ENCODE measurements at regions of chr3 and their contacts with region 1.

Region 1: DNA sequence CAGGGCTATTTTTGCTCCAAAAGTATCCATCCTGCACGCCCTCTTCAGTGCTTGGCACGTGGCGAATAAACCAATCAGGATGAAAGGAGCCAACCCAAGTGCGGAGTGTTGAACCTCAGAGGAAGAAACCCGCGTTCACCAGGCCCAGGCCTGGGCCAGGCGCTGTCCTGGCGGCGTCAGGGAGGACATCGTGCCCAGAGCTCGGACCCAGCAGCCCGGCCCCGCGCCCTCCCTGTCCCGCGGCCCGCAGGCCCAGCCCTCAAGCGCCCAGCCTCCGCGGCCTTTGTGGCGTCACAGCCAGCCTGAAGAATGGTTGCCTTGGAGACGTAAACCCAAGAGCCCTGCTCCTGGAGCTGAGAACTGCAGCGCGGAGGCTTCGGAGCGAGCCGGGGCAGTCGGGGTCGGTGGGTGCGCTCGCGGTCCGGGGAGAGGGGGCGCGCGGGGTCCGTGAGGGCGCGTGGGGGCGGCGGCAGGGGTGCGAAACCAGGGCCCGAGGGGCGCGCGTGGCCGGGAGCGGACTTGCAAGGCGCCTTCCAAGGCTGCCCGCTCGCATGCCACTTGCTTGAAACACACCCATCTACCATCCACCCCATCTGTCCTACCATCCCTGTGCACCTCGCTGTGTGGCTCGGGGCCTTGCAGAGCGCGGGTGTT is at the start of gene CFAP100:
- ATAC-seq: peak; percentile 83 to 99 (median 97)
- H3K4me3 ChIP-seq: peak within 1 kb of the TSS in 4 of 5 donors; percentile 4 to 25 (median 16)
- H3K27ac ChIP-seq: no peak within 1 kb of the TSS
- H3K4me1 ChIP-seq: peaks cover 8 to 13% of the 10 kb centered on the region in 2 donors
- total RNA-seq, gene CFAP100: 0.22 to 5.8 (median 0.66) TPM in 4 of 8 experiments, not detected in the others

Region 2: GRCh38 chr3:126052196-126053058 is 342.3 kb before region 1 on chr3:
- in situ Hi-C with region 1: no loop called
- ATAC-seq: no peak
- H3K4me3 ChIP-seq: no peak overlapping the region
- H3K27ac ChIP-seq: no peak overlapping the region
- H3K4me1 ChIP-seq: no peaks in the 10 kb centered on the region

Region 3: GRCh38 chr3:126245811-126246727 is 148.6 kb before region 1 on chr3:
- in situ Hi-C with region 1: loop called in 5 of 9 experiments (anchors 5 to 25 kb)
- ATAC-seq: peak; percentile 79 to 97 (median 94)
- H3K4me3 ChIP-seq: no peak overlapping the region
- H3K27ac ChIP-seq: no peak overlapping the region
- H3K4me1 ChIP-seq: no peaks in the 10 kb centered on the region

Region 4: DNA sequence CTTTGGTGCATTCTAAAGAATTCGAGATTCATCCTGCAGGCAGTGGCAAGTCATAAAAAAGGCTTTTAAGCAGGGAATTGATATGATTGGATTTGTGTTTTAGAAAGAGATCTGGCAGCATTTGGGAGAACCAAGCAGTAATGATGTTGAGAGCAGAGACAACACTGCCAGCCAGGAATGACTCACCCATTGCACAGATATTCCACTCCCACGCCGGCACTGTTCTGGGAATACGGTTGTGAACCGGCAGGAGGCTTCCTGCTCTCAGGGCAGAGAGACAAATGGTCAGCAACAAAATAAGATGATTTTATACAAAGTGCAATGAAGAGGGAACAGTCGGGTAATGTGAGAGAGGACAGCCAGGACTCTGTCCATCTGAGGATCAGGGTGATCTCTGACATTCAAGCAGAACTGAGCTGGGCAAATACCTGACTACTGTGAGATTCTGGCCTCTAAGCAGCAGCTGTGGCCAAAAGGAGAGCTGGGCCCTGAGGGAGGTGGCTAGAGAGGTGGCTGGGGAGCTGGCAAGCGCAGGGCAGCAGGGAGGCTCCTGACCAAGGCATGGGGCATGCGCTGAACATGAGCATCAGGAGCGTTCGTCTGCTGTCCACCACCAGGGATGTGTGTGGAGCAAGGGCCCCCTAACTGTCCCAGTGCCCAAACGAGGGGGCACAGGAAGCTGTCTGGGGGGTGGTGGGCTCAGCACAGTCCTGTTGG is 532.1 kb after region 1 on chr3:
- in situ Hi-C with region 1: no loop called
- ATAC-seq: peak in 6 of 8 experiments; percentile 4 to 98 (median 24)
- H3K4me3 ChIP-seq: no peak overlapping the region
- H3K27ac ChIP-seq: peak overlapping the region in 1 of 2 donors; percentile 63
- H3K4me1 ChIP-seq: peaks cover 7 to 29% of the 10 kb centered on the region in 2 donors

Measured in motor neuron (in vitro differentiated cells).